ENCODE measurements at regions of chr2 and their contacts with region 1.

Region 1: DNA sequence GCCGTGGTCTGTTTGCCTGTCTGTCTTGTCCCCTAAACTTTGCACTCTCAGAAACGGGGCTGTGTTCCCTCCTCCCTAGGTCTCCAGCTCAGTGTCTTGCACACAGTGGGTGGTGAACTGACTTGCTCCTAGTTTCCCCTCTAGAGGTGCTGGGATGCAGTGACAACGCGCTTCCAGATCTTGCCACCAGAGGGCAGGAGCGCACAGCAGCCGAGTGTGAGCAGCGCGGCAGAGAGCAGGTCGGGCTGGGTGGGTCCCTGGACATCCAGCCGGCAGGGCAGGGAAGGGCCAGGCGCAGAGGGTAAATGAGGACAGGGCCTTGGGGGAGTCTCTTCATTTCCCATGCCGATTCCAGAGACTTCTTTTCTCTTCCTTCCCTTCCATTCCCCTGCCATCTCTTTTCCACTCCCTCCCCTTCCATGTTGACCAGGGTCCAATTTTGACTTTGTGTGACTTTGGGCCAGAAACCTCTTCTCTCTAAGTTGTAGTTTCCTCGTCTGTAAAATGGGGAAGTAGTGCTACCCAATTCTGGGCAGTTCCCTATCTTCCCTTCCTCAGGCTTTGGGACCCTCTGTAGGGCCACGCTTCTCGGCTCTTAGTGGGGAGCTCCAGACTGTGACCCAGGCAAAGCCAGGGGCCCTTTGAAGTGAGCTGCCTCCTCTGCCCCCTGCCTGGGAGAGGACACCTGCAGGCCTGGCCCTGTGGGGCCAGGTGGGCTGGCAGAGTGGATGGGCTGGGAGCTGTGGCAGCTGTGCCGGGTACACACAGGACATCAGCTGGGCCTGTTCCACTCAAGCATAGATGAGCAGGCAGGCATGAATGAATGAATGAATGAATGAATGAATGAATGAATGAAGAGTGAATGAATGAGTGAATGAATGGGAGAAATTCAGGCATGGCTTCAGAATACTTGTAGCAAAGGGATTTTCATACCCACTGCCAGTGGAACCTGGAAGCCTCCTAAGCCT is 43.3 kb upstream of the TAF1B start:
- DNase-seq: peak; percentile 81 to 84
- H3K4me3 ChIP-seq: no peak overlapping the region
- H3K27ac ChIP-seq: peak overlapping the region in 1 of 3 donors; percentile 63
- H3K4me1 ChIP-seq: peaks cover 0 to 4% of the 10 kb centered on the region in 2 donors
- H3K27me3 ChIP-seq: no peaks in the 10 kb centered on the region
- CTCF ChIP-seq: peak; percentile 90 to 98 (median 94)
- POLR2A ChIP-seq: no peak

Region 2: GRCh38 chr2:9877733-9878125 is 77.8 kb after region 1 on chr2:
- intact Hi-C with region 1: no loop called
- DNase-seq: no peak
- H3K4me3 ChIP-seq: no peak overlapping the region
- H3K27ac ChIP-seq: no peak overlapping the region
- H3K4me1 ChIP-seq: no peaks in the 10 kb centered on the region
- H3K27me3 ChIP-seq: no peaks in the 10 kb centered on the region
- CTCF ChIP-seq: no peak
- POLR2A ChIP-seq: no peak

Region 3: DNA sequence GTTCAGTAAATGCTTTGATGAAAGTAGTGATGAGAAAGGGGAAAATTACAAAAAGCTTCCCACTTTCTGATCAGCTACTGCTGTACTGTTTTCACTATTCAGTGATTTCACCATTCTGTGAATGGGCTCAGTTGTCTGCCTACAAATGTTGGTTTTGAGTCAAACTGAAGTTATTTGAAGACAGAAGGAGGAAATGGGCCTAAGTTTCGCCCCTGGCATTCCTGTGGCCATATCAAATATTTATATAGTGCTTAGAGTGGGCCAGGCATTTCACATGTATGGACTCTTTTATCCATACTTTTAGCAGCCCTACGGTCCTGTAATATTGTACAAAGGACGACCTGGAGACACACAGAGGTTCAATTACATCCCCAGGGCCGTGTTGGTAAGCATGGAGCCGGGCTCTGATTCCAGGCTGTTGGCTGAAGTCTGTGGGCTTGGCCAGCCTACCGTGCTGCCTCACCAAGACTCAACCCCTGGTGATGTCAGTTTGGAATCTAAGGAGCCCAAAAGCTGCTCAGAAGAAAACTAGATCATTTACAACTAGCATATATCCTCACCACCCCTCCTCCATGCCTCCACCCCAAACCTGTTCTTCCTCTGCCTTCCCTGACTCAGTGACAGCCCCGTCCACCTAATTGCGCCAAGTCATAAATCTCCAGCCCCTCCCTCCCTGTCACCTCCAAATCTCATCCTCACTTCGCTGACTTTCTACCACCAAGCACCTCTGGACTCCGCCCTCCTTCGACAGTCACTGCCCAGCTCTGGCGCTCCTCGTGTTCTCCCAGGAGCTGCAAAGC is 141.4 kb after region 1 on chr2:
- intact Hi-C with region 1: loop called (anchors 10 kb)
- DNase-seq: peak in 1 of 2 donors; percentile 28
- H3K4me3 ChIP-seq: no peak overlapping the region
- H3K27ac ChIP-seq: no peak overlapping the region
- H3K4me1 ChIP-seq: peaks cover 0 to 11% of the 10 kb centered on the region in 2 donors
- H3K27me3 ChIP-seq: no peaks in the 10 kb centered on the region
- CTCF ChIP-seq: no peak
- POLR2A ChIP-seq: no peak

Region 4: GRCh38 chr2:9984217-9984739 is 184.3 kb after region 1 on chr2:
- intact Hi-C with region 1: loop called (anchors 10 kb)
- DNase-seq: no peak
- H3K4me3 ChIP-seq: no peak overlapping the region
- H3K27ac ChIP-seq: peak overlapping the region in 1 of 3 donors; percentile 26
- H3K4me1 ChIP-seq: peaks cover 0 to 41% of the 10 kb centered on the region in 2 donors
- H3K27me3 ChIP-seq: no peaks in the 10 kb centered on the region
- CTCF ChIP-seq: peak; percentile 51 to 92 (median 73)
- POLR2A ChIP-seq: no peak